Activated naive CD4-positive, alpha-beta T cell treated with anti-CD3 and anti-CD28 coated beads for 36 hours (primary cell): ENCODE measurements at regions of chr15 and their contacts with region 1.

Region 1: GRCh38 chr15:79380755-79381497 is 51.2 kb upstream of the MINAR1 start:
- DNase-seq: peak; percentile 86
- H3K4me3 Mint-ChIP-seq: no peak overlapping the region
- H3K27ac Mint-ChIP-seq: no peak overlapping the region
- H3K4me1 Mint-ChIP-seq: no peaks in the 10 kb centered on the region
- H3K27me3 Mint-ChIP-seq: no peaks in the 10 kb centered on the region

Region 2: DNA sequence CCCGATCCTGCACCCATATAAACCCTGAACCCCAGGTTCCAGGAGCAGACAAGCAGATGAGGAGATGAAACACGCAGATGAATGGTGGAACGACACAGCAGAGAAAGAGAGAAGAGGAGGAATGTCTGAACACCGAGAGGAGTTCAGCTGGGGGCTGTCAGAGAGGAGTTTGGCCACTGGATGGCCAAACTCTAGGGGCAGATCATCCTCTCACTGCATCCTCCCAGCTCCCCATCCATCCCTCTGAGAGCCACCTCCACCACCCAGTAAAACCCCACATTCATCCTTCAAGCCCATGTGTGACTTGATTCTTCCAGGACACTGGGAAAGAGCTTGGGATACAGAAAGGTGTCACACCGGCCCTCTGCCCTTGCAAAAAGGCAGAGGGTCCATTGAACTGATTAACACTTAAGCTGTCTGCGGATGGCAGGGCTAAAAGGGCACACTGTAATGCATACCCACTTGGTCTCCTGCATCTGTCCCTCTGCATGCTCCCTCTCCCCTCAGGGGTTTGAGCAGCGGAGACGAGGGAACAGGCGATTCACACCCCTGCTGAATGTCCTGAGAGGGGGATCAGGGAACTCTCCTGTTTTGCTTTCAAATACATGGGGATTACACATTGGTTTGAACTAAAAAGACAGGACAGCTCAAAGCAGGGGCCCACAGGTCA is 16.2 kb before region 1 on chr15:
- CTCF ChIA-PET with region 1: interaction called, 19 read pairs
- intact Hi-C with region 1: no loop called
- DNase-seq: no peak
- H3K4me3 Mint-ChIP-seq: no peak overlapping the region
- H3K27ac Mint-ChIP-seq: no peak overlapping the region
- H3K4me1 Mint-ChIP-seq: no peaks in the 10 kb centered on the region
- H3K27me3 Mint-ChIP-seq: no peaks in the 10 kb centered on the region

Region 3: GRCh38 chr15:79451361-79451999 is 70.6 kb after region 1 on chr15:
- CTCF ChIA-PET with region 1: no interaction called
- intact Hi-C with region 1: no loop called
- DNase-seq: no peak
- H3K4me3 Mint-ChIP-seq: no peak overlapping the region
- H3K27ac Mint-ChIP-seq: no peak overlapping the region
- H3K4me1 Mint-ChIP-seq: no peaks in the 10 kb centered on the region
- H3K27me3 Mint-ChIP-seq: peaks cover 3% of the 10 kb centered on the region

Region 4: DNA sequence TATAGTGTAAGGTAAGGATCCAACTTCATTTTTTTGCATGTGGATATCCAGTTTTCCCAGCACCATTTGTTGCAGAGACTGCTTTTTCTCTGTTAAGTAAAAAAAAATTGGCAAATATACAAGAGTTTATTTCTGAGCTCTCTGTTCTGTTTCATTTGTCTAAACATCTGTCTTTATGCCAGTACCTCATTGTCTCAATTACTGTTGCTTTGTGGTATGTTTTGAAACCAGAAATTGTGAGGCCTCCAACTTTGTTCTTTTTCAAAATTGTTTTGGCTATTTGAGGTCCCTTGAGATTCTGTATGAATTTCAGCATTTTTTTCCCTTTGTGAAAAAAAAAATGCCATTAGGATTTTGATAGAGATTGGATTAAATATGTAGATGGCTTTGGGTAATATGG is 201.7 kb after region 1 on chr15:
- CTCF ChIA-PET with region 1: interaction called, 13 read pairs
- intact Hi-C with region 1: no loop called
- DNase-seq: no peak
- H3K4me3 Mint-ChIP-seq: no peak overlapping the region
- H3K27ac Mint-ChIP-seq: no peak overlapping the region
- H3K4me1 Mint-ChIP-seq: no peaks in the 10 kb centered on the region
- H3K27me3 Mint-ChIP-seq: peaks cover 26% of the 10 kb centered on the region

Region 5: GRCh38 chr15:79615754-79616153 is 234.8 kb after region 1 on chr15:
- CTCF ChIA-PET with region 1: no interaction called
- intact Hi-C with region 1: no loop called
- DNase-seq: no peak
- H3K4me3 Mint-ChIP-seq: no peak overlapping the region
- H3K27ac Mint-ChIP-seq: no peak overlapping the region
- H3K4me1 Mint-ChIP-seq: no peaks in the 10 kb centered on the region
- H3K27me3 Mint-ChIP-seq: peaks cover 10% of the 10 kb centered on the region

Region 6: DNA sequence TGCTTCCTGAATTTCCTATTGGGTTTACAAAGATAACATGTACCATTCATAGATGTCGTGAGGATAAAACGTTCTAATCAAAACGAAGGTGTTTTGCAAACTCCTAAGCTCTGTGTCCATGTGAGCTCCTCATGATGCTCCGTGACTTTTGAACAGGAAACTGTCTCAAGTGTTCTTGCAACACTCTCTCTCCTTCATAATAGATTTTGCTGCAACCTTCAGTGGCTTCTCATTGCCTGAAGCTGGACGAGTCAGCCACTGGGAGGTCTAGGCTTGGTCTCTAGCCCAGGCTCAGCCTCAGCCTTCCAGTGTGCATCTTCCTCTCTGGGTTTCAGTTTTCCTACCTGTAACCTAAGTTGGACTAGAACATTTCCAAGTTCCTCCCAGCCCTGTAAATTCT is 608.8 kb after region 1 on chr15:
- CTCF ChIA-PET with region 1: interaction called, 7 read pairs
- intact Hi-C with region 1: loop called (anchors 2 kb)
- DNase-seq: no peak
- H3K4me3 Mint-ChIP-seq: no peak overlapping the region
- H3K27ac Mint-ChIP-seq: no peak overlapping the region
- H3K4me1 Mint-ChIP-seq: peaks cover 13% of the 10 kb centered on the region
- H3K27me3 Mint-ChIP-seq: no peaks in the 10 kb centered on the region